ENCODE measurements at regions of chr16 and their contacts with region 1.

Region 1: DNA sequence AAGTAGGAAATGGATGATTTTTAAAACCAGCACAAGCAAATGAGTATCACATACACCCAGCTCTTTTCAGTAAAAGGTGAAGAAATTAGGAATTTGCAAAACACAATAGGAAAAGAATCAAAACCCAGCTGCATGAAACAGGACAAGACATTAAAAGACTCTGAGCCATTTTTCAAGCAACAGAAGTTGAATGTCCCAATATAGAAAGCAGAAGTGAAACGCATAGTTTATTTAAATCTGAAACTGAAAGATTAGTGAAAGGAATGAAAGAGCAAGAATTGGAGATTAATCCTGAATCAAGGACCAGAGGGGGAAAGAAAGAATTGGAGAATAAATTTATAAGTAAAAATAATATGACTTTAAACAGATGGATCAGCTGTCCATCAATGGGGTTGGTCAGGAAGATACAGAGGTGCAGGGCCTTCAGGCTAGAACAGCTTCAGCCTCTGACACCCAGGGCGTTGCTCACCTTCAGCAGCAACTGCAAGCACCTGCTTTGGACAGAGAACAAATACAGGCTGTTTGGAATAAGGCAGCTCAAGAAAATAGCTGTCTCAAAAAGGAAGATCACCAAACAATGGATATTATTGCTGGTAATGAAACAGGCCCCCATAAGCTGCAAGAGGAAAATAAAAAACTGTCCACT is 3.9 kb upstream of the ARHGAP17 start:
- DNase-seq: no peak
- H3K4me3 Mint-ChIP-seq: peak overlapping the region; percentile 3
- H3K27ac Mint-ChIP-seq: peak overlapping the region; percentile 83
- H3K4me1 Mint-ChIP-seq: peaks cover 49% of the 10 kb centered on the region
- H3K27me3 Mint-ChIP-seq: no peaks in the 10 kb centered on the region

Region 2: GRCh38 chr16:24986512-24987303 is 32.4 kb before region 1 on chr16:
- CTCF ChIA-PET with region 1: no interaction called
- POLR2A ChIA-PET with region 1: no interaction called
- DNase-seq: no peak
- H3K4me3 Mint-ChIP-seq: no peak overlapping the region
- H3K27ac Mint-ChIP-seq: no peak overlapping the region
- H3K4me1 Mint-ChIP-seq: peaks cover 48% of the 10 kb centered on the region
- H3K27me3 Mint-ChIP-seq: no peaks in the 10 kb centered on the region

Region 3: GRCh38 chr16:25031441-25032307 is 12.6 kb after region 1 on chr16:
- CTCF ChIA-PET with region 1: interaction called, 13 read pairs
- POLR2A ChIA-PET with region 1: interaction called, 3 read pairs
- DNase-seq: peak; percentile 96
- H3K4me3 Mint-ChIP-seq: peak overlapping the region; percentile 93
- H3K27ac Mint-ChIP-seq: peak overlapping the region; percentile 96
- H3K4me1 Mint-ChIP-seq: peaks cover 30% of the 10 kb centered on the region
- H3K27me3 Mint-ChIP-seq: no peaks in the 10 kb centered on the region

Region 4: GRCh38 chr16:25151996-25152395 is 132.9 kb after region 1 on chr16:
- CTCF ChIA-PET with region 1: no interaction called
- POLR2A ChIA-PET with region 1: no interaction called
- DNase-seq: no peak
- H3K4me3 Mint-ChIP-seq: no peak overlapping the region
- H3K27ac Mint-ChIP-seq: no peak overlapping the region
- H3K4me1 Mint-ChIP-seq: peaks cover 13% of the 10 kb centered on the region
- H3K27me3 Mint-ChIP-seq: no peaks in the 10 kb centered on the region